ENCODE measurements at regions of chr1 and their contacts with region 1.

Region 1: GRCh38 chr1:161132410-161133219 is at the start of gene DEDD:
- DNase-seq: peak; percentile 75 to 97 (median 86)
- ATAC-seq: peak; percentile 93
- H3K4me3 ChIP-seq: peak within 1 kb of the TSS; percentile 66 to 97
- H3K4me3 Mint-ChIP-seq: no peak within 1 kb of the TSS
- H3K27ac ChIP-seq: peak within 1 kb of the TSS; percentile 80 to 87
- H3K27ac Mint-ChIP-seq: no peak within 1 kb of the TSS
- H3K4me1 ChIP-seq: peaks cover 52% of the 10 kb centered on the region
- H3K4me1 Mint-ChIP-seq: peaks cover 49% of the 10 kb centered on the region
- H3K27me3 ChIP-seq: no peaks in the 10 kb centered on the region
- H3K27me3 Mint-ChIP-seq: no peaks in the 10 kb centered on the region
- CTCF ChIP-seq: no peak
- total RNA-seq, gene DEDD: 32.4 to 34.6 TPM

Region 2: GRCh38 chr1:160261893-160262794 is 870.5 kb before region 1 on chr1 and contains the start of gene DCAF8:
- CTCF ChIA-PET with region 1: no interaction called
- POLR2A ChIA-PET with region 1: no interaction called
- intact Hi-C with region 1: loop called in 1 of 2 experiments (anchors 10 kb)
- DNase-seq: peak; percentile 97 to 99 (median 98)
- ATAC-seq: peak; percentile 87
- H3K4me3 ChIP-seq: peak within 1 kb of the TSS; percentile 91 to 99
- H3K4me3 Mint-ChIP-seq: peak within 1 kb of the TSS; percentile 96
- H3K27ac ChIP-seq: peak within 1 kb of the TSS; percentile 83 to 99
- H3K27ac Mint-ChIP-seq: peak within 1 kb of the TSS; percentile 98
- H3K4me1 ChIP-seq: peaks cover 31% of the 10 kb centered on the region
- H3K4me1 Mint-ChIP-seq: peaks cover 41% of the 10 kb centered on the region
- H3K27me3 ChIP-seq: no peaks in the 10 kb centered on the region
- H3K27me3 Mint-ChIP-seq: no peaks in the 10 kb centered on the region
- CTCF ChIP-seq: no peak
- total RNA-seq, gene DCAF8: 152 to 162 TPM

Region 3: GRCh38 chr1:160726498-160727315 is 405.9 kb before region 1 on chr1:
- CTCF ChIA-PET with region 1: no interaction called
- POLR2A ChIA-PET with region 1: no interaction called
- intact Hi-C with region 1: no loop called
- DNase-seq: peak; percentile 29 to 89 (median 63)
- ATAC-seq: peak; percentile 86
- H3K4me3 ChIP-seq: no peak overlapping the region
- H3K4me3 Mint-ChIP-seq: no peak overlapping the region
- H3K27ac ChIP-seq: peak overlapping the region in 1 of 2 experiments; percentile 22
- H3K27ac Mint-ChIP-seq: no peak overlapping the region
- H3K4me1 ChIP-seq: peaks cover 21% of the 10 kb centered on the region
- H3K4me1 Mint-ChIP-seq: peaks cover 16% of the 10 kb centered on the region
- H3K27me3 ChIP-seq: no peaks in the 10 kb centered on the region
- H3K27me3 Mint-ChIP-seq: no peaks in the 10 kb centered on the region
- CTCF ChIP-seq: peak; percentile 99

Region 4: GRCh38 chr1:161045750-161046571 is 86.7 kb before region 1 on chr1 and contains the start of gene USF1:
- CTCF ChIA-PET with region 1: interaction called, 4 read pairs
- POLR2A ChIA-PET with region 1: interaction called, 13 read pairs
- intact Hi-C with region 1: loop called in 1 of 2 experiments (anchors 1 kb)
- DNase-seq: peak; percentile 88 to 98 (median 92)
- ATAC-seq: peak; percentile 76
- H3K4me3 ChIP-seq: peak within 1 kb of the TSS; percentile 87 to 96
- H3K4me3 Mint-ChIP-seq: peak within 1 kb of the TSS; percentile 98
- H3K27ac ChIP-seq: peak within 1 kb of the TSS; percentile 82 to 91
- H3K27ac Mint-ChIP-seq: peak within 1 kb of the TSS; percentile 100
- H3K4me1 ChIP-seq: peaks cover 24% of the 10 kb centered on the region
- H3K4me1 Mint-ChIP-seq: peaks cover 50% of the 10 kb centered on the region
- H3K27me3 ChIP-seq: no peaks in the 10 kb centered on the region
- H3K27me3 Mint-ChIP-seq: no peaks in the 10 kb centered on the region
- CTCF ChIP-seq: no peak
- total RNA-seq, gene USF1: 95.6 to 98.8 TPM

Region 5: DNA sequence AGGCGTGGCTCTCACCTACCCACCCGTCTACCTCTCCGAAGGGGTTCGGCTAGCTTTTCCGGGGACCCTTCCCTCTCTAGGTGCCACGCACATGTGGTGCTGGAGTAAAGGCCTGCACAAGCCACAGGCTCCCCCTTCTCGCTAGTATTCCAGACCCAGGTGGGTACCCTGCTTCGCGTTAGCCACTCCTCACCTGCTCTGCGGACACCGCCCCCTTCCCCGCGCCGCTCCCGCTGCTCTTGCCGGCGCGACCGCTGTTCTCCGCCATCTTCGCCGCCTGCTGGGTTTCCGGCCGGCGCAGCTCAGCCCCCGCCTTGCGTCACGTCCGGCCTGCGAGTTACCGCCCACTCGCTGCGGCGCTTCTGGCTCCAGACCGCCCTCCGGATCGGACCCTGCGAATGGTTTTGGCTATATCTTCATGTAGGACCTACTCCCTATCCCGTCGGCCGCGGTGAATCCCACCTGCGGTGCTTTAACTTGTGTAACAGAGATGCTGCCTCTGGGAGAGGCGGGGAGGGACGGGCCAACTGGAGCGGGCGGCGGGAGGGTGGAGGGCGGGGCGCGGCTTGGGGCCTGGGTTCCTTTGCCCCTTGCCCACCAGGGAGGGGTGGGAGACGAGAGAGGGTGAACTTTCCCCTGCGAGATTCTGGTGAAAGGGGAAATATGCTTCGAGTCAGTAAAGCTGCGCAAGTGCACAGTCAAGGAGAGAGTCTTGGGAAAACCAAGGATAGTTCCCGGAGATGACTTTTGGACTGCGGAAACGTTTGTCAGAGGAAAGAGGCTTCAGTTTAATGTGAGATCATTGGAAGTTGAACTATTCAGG is 14.6 kb before region 1 on chr1 and contains the starts of genes NIT1 and PFDN2:
- CTCF ChIA-PET with region 1: interaction called, 4 read pairs
- POLR2A ChIA-PET with region 1: interaction called, 18 read pairs
- intact Hi-C with region 1: loop called (anchors 1 kb)
- DNase-seq: peak; percentile 67 to 93 (median 84)
- ATAC-seq: peak; percentile 72
- H3K4me3 ChIP-seq: peak within 1 kb of the TSS; percentile 95 to 96
- H3K4me3 Mint-ChIP-seq: peak within 1 kb of the TSS; percentile 93
- H3K27ac ChIP-seq: peak within 1 kb of the TSS; percentile 91 to 93
- H3K27ac Mint-ChIP-seq: peak within 1 kb of the TSS; percentile 95
- H3K4me1 ChIP-seq: peaks cover 43% of the 10 kb centered on the region
- H3K4me1 Mint-ChIP-seq: peaks cover 60% of the 10 kb centered on the region
- H3K27me3 ChIP-seq: no peaks in the 10 kb centered on the region
- H3K27me3 Mint-ChIP-seq: no peaks in the 10 kb centered on the region
- CTCF ChIP-seq: no peak
- total RNA-seq, gene NIT1: 11.5 to 12.8 TPM
- total RNA-seq, gene PFDN2: 64.7 to 75.5 TPM

Region 6: GRCh38 chr1:161159087-161159912 is 26.7 kb after region 1 on chr1 and contains the start of gene USP21:
- CTCF ChIA-PET with region 1: interaction called, 4 read pairs
- POLR2A ChIA-PET with region 1: interaction called, 4 read pairs
- intact Hi-C with region 1: loop called in 1 of 2 experiments (anchors 1 kb)
- DNase-seq: peak; percentile 84 to 95 (median 93)
- ATAC-seq: peak; percentile 96
- H3K4me3 ChIP-seq: peak within 1 kb of the TSS; percentile 76 to 82
- H3K4me3 Mint-ChIP-seq: peak within 1 kb of the TSS; percentile 94
- H3K27ac ChIP-seq: peak within 1 kb of the TSS; percentile 72 to 82
- H3K27ac Mint-ChIP-seq: peak within 1 kb of the TSS; percentile 95
- H3K4me1 ChIP-seq: peaks cover 37% of the 10 kb centered on the region
- H3K4me1 Mint-ChIP-seq: peaks cover 58% of the 10 kb centered on the region
- H3K27me3 ChIP-seq: no peaks in the 10 kb centered on the region
- H3K27me3 Mint-ChIP-seq: no peaks in the 10 kb centered on the region
- CTCF ChIP-seq: no peak
- total RNA-seq, gene USP21: 34.8 to 38.1 TPM

Region 7: DNA sequence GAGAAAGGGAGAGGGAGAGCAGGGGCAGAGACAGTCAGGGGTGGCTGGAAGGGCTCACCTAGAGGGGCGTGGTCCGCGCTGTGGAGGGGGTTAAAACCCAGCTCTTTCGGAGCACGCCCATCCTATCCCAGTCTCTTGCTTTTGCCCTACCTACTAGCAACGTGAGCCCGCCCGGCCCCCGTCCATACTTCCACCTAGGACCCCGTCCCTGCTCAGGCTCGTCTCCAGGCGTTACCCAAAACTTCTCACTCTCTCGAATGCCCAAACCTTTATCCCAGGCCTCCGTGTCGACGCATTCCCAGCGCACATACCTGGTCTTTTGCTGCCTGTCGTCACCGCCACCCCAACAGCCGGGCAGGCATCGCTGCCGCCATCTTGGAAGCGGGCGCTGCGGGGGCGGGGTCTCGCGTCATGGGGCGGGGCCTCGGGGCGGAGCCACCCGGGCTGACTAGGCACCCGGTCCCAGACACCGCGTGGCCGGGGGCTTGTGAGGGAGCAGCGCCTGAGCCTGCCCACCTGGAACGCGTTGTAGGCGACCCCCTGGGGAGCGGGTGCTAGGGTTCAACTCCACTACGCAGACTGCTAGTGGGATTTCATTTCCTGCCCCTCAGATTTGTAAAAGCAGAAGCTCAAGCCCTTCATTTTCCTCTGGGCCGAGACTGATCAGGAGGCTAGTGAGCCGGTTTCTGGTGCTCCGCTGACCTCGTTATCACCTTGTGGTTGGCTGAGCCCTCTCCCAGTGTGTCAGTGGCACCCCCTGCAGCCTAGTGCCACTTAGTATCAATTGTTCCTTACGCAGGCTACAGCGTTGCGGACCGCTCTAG is 44.7 kb after region 1 on chr1 and contains the start of gene B4GALT3:
- CTCF ChIA-PET with region 1: no interaction called
- POLR2A ChIA-PET with region 1: no interaction called
- intact Hi-C with region 1: loop called in 1 of 2 experiments (anchors 2 kb)
- DNase-seq: peak; percentile 88 to 97 (median 90)
- ATAC-seq: peak; percentile 89
- H3K4me3 ChIP-seq: peak within 1 kb of the TSS; percentile 90 to 92
- H3K4me3 Mint-ChIP-seq: peak within 1 kb of the TSS; percentile 98
- H3K27ac ChIP-seq: peak within 1 kb of the TSS; percentile 80 to 87
- H3K27ac Mint-ChIP-seq: peak within 1 kb of the TSS; percentile 99
- H3K4me1 ChIP-seq: peaks cover 50% of the 10 kb centered on the region
- H3K4me1 Mint-ChIP-seq: peaks cover 75% of the 10 kb centered on the region
- H3K27me3 ChIP-seq: no peaks in the 10 kb centered on the region
- H3K27me3 Mint-ChIP-seq: no peaks in the 10 kb centered on the region
- CTCF ChIP-seq: no peak
- total RNA-seq, gene B4GALT3: 33.8 to 36.4 TPM

Region 8: DNA sequence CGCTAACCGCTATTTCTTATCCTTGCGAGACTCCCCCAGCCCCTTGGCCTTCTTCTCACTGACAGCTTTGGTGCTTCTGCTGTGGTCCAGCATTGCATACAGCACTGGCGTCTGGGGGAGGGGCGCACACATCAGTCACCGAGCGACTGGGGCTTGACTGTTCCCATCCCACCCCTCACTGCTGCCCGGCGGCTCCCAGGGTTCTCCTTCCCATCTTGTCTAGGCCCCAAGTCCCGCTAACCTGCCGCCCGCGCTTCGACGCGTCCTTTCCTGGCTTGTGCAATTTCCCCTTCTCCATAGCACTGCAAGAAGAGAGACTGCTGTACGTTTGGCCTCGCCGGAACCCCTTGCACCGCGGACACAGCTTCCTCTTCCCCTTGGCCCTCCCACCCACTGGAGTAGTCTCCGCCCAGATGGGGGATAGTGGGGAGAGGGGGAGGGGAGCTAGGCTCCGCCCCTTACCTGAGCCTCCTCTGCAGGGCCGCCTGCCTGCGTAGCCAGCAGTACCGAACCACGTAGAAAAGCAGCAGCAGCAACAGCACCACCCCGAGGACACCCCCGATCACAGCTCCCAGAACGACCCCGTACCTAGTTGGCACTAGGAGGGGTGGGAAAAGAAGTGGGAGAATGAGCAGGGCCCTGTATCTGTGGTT is 173.4 kb after region 1 on chr1:
- CTCF ChIA-PET with region 1: no interaction called
- POLR2A ChIA-PET with region 1: no interaction called
- intact Hi-C with region 1: loop called in 1 of 2 experiments (anchors 5 kb)
- DNase-seq: peak; percentile 73 to 95 (median 89)
- ATAC-seq: peak; percentile 98
- H3K4me3 ChIP-seq: peak overlapping the region; percentile 74 to 93
- H3K4me3 Mint-ChIP-seq: peak overlapping the region; percentile 97
- H3K27ac ChIP-seq: peak overlapping the region; percentile 70 to 71
- H3K27ac Mint-ChIP-seq: peak overlapping the region; percentile 93
- H3K4me1 ChIP-seq: peaks cover 31% of the 10 kb centered on the region
- H3K4me1 Mint-ChIP-seq: peaks cover 40% of the 10 kb centered on the region
- H3K27me3 ChIP-seq: no peaks in the 10 kb centered on the region
- H3K27me3 Mint-ChIP-seq: no peaks in the 10 kb centered on the region
- CTCF ChIP-seq: peak; percentile 54